GM12878 (cell line): ENCODE measurements at regions of chr4 and their contacts with region 1.

Region 1: GRCh38 chr4:24896977-24897376 is 15.9 kb downstream of the CCDC149 start:
- DNase-seq: no peak
- ATAC-seq: no peak
- H3K4me3 ChIP-seq: no peak overlapping the region
- H3K27ac ChIP-seq: no peak overlapping the region
- H3K4me1 ChIP-seq: no peaks in the 10 kb centered on the region
- H3K27me3 ChIP-seq: no peaks in the 10 kb centered on the region; a peak in 2 of 4 replicates
- CTCF ChIP-seq: no peak
- EP300 ChIP-seq: no peak
- POLR2A ChIP-seq: no peak
- RAD21 ChIP-seq: no peak

Region 2: GRCh38 chr4:24515698-24516097 is 381.3 kb before region 1 on chr4:
- CTCF ChIA-PET with region 1: no interaction called
- POLR2A ChIA-PET with region 1: interaction called, 11 read pairs
- RAD21 ChIA-PET with region 1: no interaction called
- SMC1A ChIA-PET with region 1: no interaction called
- in situ Hi-C with region 1: no loop called
- intact Hi-C with region 1: no loop called
- DNase-seq: no peak
- ATAC-seq: no peak; the same call in 1 of the 3 replicates
- H3K4me3 ChIP-seq: no peak overlapping the region
- H3K27ac ChIP-seq: no peak overlapping the region
- H3K4me1 ChIP-seq: no peaks in the 10 kb centered on the region
- H3K27me3 ChIP-seq: no peaks in the 10 kb centered on the region
- CTCF ChIP-seq: no peak
- EP300 ChIP-seq: no peak
- POLR2A ChIP-seq: no peak
- RAD21 ChIP-seq: no peak